ENCODE measurements at regions of chr11 and their contacts with region 1.

Region 1: GRCh38 chr11:61129639-61130523 is 27.6 kb downstream of the CD5 start:
- DNase-seq: peak; percentile 97
- H3K4me3 Mint-ChIP-seq: peak overlapping the region; percentile 50
- H3K27ac Mint-ChIP-seq: peak overlapping the region; percentile 64
- H3K4me1 Mint-ChIP-seq: peaks cover 13% of the 10 kb centered on the region
- H3K27me3 Mint-ChIP-seq: no peaks in the 10 kb centered on the region

Region 2: DNA sequence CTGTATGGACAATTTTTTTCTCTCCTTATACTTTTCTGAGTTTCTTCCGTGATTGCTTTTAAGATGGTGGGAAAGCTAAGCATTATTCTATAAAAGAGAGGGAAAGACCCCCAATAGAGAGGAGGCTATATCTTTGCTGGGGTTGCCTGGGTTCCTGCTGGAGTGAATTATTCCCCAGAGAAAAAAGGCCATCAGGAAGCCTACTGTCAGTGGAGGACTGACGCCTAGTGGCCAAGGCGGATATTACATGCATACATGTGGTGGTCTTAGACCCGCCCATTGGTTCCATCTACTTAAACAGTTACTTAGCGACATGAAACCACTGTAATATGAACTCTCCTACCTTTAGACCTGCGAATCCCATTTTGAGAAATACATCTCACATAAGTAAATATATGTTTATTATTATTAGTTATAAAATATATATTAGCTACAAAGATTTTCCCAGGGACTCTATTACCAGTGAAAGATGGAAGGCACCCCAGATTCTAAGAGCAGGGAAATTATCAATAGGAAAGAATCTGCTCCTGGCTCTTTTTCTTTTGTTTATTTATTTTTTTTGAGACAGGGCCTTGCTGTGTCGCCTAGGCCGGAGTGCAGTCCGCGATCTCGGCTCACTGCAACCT is 57.7 kb after region 1 on chr11:
- intact Hi-C with region 1: loop called (anchors 2 kb)
- DNase-seq: peak; percentile 93
- H3K4me3 Mint-ChIP-seq: no peak overlapping the region
- H3K27ac Mint-ChIP-seq: no peak overlapping the region
- H3K4me1 Mint-ChIP-seq: peaks cover 2% of the 10 kb centered on the region
- H3K27me3 Mint-ChIP-seq: peaks cover 6% of the 10 kb centered on the region

Region 3: DNA sequence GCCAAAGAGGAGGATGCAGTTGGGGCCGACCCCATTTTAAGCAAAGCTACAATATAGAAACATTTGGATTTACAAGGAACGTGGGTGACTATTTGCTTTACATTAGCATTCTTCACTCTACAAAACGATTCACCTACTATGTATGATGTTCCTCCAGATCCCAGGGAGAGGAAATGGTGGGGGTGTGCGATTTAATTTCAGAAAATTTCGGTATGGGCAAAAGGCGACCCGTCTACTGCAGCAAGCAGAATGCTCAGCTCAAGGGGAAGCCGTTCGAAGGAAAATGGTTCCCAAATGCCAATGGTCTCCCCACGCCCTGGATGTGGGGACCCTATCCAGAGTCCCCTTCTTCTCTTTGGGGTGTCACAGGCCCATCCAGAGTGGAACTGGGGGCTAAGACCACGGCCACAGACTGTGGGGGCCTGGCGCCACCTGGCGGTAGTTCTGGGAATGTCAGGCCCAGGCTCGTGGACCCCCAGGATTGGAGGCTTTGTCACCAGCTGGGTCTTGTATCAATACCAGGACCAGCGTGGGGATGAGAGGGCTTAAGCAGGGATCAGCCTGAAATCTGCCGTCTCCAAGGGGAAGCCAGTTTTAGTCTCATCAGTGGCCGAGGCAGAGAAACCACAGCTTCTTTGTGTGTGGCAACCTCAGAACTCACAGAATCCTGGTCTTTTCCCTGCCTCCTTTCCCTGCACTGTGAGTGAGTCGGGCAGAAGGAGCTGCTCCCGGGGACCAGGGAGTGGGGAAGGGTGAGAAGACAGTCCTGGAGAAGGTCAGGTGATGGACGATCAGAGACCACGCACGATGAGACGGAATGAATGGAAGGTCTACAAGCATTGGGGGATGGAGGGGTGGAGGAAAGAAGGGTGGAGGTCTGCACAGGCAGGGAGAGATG is 387.0 kb after region 1 on chr11:
- intact Hi-C with region 1: no loop called
- DNase-seq: peak; percentile 88
- H3K4me3 Mint-ChIP-seq: peak overlapping the region; percentile 51
- H3K27ac Mint-ChIP-seq: no peak overlapping the region
- H3K4me1 Mint-ChIP-seq: peaks cover 5% of the 10 kb centered on the region
- H3K27me3 Mint-ChIP-seq: peaks cover 13% of the 10 kb centered on the region

Measured in activated CD4-positive, alpha-beta T cell treated with anti-CD3 and anti-CD28 coated beads, Interleukin-2, amount 10 ng/mL, durations not matched to agents 24 days and 14 days (primary cell).